Natural killer cell (primary cell): ENCODE measurements at regions of chr16 and their contacts with region 1.

Region 1: GRCh38 chr16:15643048-15643945 is at the start of gene MARF1:
- DNase-seq: peak; percentile 99 to 100
- ATAC-seq: peak; percentile 87 to 98 (median 90)
- H3K4me3 ChIP-seq: peak within 1 kb of the TSS; percentile 98
- H3K4me3 Mint-ChIP-seq: peak within 1 kb of the TSS; percentile 95
- H3K27ac ChIP-seq: peak within 1 kb of the TSS; percentile 100
- H3K27ac Mint-ChIP-seq: peak within 1 kb of the TSS; percentile 98 to 99
- H3K4me1 ChIP-seq: peaks cover 8% of the 10 kb centered on the region
- H3K4me1 Mint-ChIP-seq: peaks cover 36 to 38% of the 10 kb centered on the region in 2 donors
- H3K27me3 ChIP-seq: no peaks in the 10 kb centered on the region
- H3K27me3 Mint-ChIP-seq: no peaks in the 10 kb centered on the region
- CTCF ChIP-seq: no peak
- total RNA-seq, gene MARF1: 127 to 149 (median 140) TPM

Region 2: GRCh38 chr16:15404792-15405191 is 238.5 kb before region 1 on chr16:
- intact Hi-C with region 1: no loop called
- DNase-seq: no peak
- ATAC-seq: no peak
- H3K4me3 ChIP-seq: no peak overlapping the region
- H3K4me3 Mint-ChIP-seq: no peak overlapping the region
- H3K27ac ChIP-seq: no peak overlapping the region
- H3K27ac Mint-ChIP-seq: no peak overlapping the region
- H3K4me1 ChIP-seq: no peaks in the 10 kb centered on the region
- H3K4me1 Mint-ChIP-seq: no peaks in the 10 kb centered on the region
- H3K27me3 ChIP-seq: no peaks in the 10 kb centered on the region
- H3K27me3 Mint-ChIP-seq: no peaks in the 10 kb centered on the region
- CTCF ChIP-seq: no peak

Region 3: GRCh38 chr16:15427648-15428239 is 215.6 kb before region 1 on chr16:
- intact Hi-C with region 1: loop called (anchors 2 kb)
- DNase-seq: peak; percentile 43 to 73
- ATAC-seq: peak; percentile 60 to 70 (median 69)
- H3K4me3 ChIP-seq: no peak overlapping the region
- H3K4me3 Mint-ChIP-seq: no peak overlapping the region
- H3K27ac ChIP-seq: no peak overlapping the region
- H3K27ac Mint-ChIP-seq: no peak overlapping the region
- H3K4me1 ChIP-seq: peaks cover 3% of the 10 kb centered on the region
- H3K4me1 Mint-ChIP-seq: no peaks in the 10 kb centered on the region
- H3K27me3 ChIP-seq: no peaks in the 10 kb centered on the region
- H3K27me3 Mint-ChIP-seq: peaks cover 0 to 2% of the 10 kb centered on the region in 2 donors
- CTCF ChIP-seq: peak; percentile 59

Region 4: GRCh38 chr16:15572329-15573001 is 70.8 kb before region 1 on chr16:
- intact Hi-C with region 1: no loop called
- DNase-seq: no peak
- ATAC-seq: no peak
- H3K4me3 ChIP-seq: no peak overlapping the region
- H3K4me3 Mint-ChIP-seq: no peak overlapping the region
- H3K27ac ChIP-seq: no peak overlapping the region
- H3K27ac Mint-ChIP-seq: no peak overlapping the region
- H3K4me1 ChIP-seq: no peaks in the 10 kb centered on the region
- H3K4me1 Mint-ChIP-seq: peaks cover 4 to 15% of the 10 kb centered on the region in 2 donors
- H3K27me3 ChIP-seq: no peaks in the 10 kb centered on the region
- H3K27me3 Mint-ChIP-seq: no peaks in the 10 kb centered on the region
- CTCF ChIP-seq: no peak

Region 5: GRCh38 chr16:15592324-15592723 is 51.0 kb before region 1 on chr16:
- intact Hi-C with region 1: loop called (anchors 1 kb)
- DNase-seq: peak; percentile 41 to 42
- ATAC-seq: no peak
- H3K4me3 ChIP-seq: no peak overlapping the region
- H3K4me3 Mint-ChIP-seq: peak overlapping the region; percentile 50
- H3K27ac ChIP-seq: peak overlapping the region; percentile 5
- H3K27ac Mint-ChIP-seq: peak overlapping the region; percentile 83 to 96
- H3K4me1 ChIP-seq: peaks cover 57% of the 10 kb centered on the region
- H3K4me1 Mint-ChIP-seq: peaks cover 46 to 70% of the 10 kb centered on the region in 2 donors
- H3K27me3 ChIP-seq: no peaks in the 10 kb centered on the region
- H3K27me3 Mint-ChIP-seq: no peaks in the 10 kb centered on the region
- CTCF ChIP-seq: no peak

Region 6: GRCh38 chr16:15658149-15658548 is 14.9 kb after region 1 on chr16:
- intact Hi-C with region 1: loop called (anchors 2 kb)
- DNase-seq: no peak
- ATAC-seq: no peak
- H3K4me3 ChIP-seq: no peak overlapping the region
- H3K4me3 Mint-ChIP-seq: no peak overlapping the region
- H3K27ac ChIP-seq: peak overlapping the region; percentile 72
- H3K27ac Mint-ChIP-seq: peak overlapping the region; percentile 78 to 89
- H3K4me1 ChIP-seq: peaks cover 27% of the 10 kb centered on the region
- H3K4me1 Mint-ChIP-seq: peaks cover 40 to 51% of the 10 kb centered on the region in 2 donors
- H3K27me3 ChIP-seq: no peaks in the 10 kb centered on the region
- H3K27me3 Mint-ChIP-seq: no peaks in the 10 kb centered on the region
- CTCF ChIP-seq: no peak

Region 7: GRCh38 chr16:15682105-15682570 is 38.8 kb after region 1 on chr16:
- intact Hi-C with region 1: loop called (anchors 5 kb)
- DNase-seq: peak; percentile 32 to 65
- ATAC-seq: peak; percentile 63 to 97 (median 78)
- H3K4me3 ChIP-seq: no peak overlapping the region
- H3K4me3 Mint-ChIP-seq: no peak overlapping the region
- H3K27ac ChIP-seq: no peak overlapping the region
- H3K27ac Mint-ChIP-seq: peak overlapping the region; percentile 58 to 69
- H3K4me1 ChIP-seq: no peaks in the 10 kb centered on the region
- H3K4me1 Mint-ChIP-seq: peaks cover 5 to 12% of the 10 kb centered on the region in 2 donors
- H3K27me3 ChIP-seq: no peaks in the 10 kb centered on the region
- H3K27me3 Mint-ChIP-seq: no peaks in the 10 kb centered on the region
- CTCF ChIP-seq: peak; percentile 49

Region 8: GRCh38 chr16:15704545-15704987 is 61.3 kb after region 1 on chr16:
- intact Hi-C with region 1: loop called (anchors 1 kb)
- DNase-seq: peak; percentile 69 to 85
- ATAC-seq: peak; percentile 77 to 89 (median 82)
- H3K4me3 ChIP-seq: no peak overlapping the region
- H3K4me3 Mint-ChIP-seq: peak overlapping the region; percentile 43
- H3K27ac ChIP-seq: no peak overlapping the region
- H3K27ac Mint-ChIP-seq: peak overlapping the region; percentile 75 to 86
- H3K4me1 ChIP-seq: peaks cover 10% of the 10 kb centered on the region
- H3K4me1 Mint-ChIP-seq: peaks cover 11 to 28% of the 10 kb centered on the region in 2 donors
- H3K27me3 ChIP-seq: no peaks in the 10 kb centered on the region
- H3K27me3 Mint-ChIP-seq: no peaks in the 10 kb centered on the region
- CTCF ChIP-seq: peak; percentile 82